ENCODE measurements at regions of chr14 and their contacts with region 1.

Region 1: GRCh38 chr14:22549981-22550673 is 38.9 kb downstream of the DAD1 start:
- DNase-seq: peak; percentile 84
- ATAC-seq: peak; percentile 63
- H3K4me3 Mint-ChIP-seq: peak overlapping the region; percentile 71
- H3K27ac Mint-ChIP-seq: peak overlapping the region; percentile 99
- H3K4me1 Mint-ChIP-seq: peaks cover 94% of the 10 kb centered on the region
- H3K27me3 Mint-ChIP-seq: no peaks in the 10 kb centered on the region

Region 2: DNA sequence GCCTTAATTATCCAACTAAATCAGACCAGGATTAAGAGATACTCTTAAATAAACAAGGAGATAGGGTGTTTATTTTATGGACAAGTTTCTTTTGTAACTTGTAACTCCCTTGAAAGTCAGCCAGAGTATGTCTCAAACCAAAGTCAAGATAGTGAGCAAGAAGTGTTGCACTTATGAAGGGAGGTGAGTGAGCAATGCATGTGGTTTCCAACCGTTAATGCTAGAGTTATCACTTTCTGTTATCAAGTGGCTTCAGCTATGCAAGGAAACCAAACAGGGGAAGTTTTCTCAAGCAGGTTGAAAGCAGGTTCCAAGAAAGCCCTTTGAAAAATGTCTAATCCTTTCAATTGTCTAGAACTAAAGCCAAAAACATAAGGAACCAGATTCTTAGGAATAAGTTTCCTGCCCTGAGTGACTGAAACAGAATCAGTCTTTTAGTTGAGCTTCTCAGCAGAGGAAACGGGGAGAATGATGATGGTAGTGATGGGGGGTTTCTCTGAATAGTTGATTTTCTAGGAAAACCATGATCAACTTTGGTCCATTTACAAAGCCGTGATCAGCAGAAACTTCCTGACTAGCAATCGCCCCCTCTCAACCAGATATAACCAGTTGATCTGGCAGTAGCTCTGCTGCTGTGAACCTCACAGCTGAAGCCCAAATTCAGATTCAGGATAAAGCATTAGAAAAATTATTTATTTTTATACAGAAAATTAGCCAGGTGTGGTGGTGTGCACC is 89.5 kb before region 1 on chr14:
- CTCF ChIA-PET with region 1: no interaction called
- POLR2A ChIA-PET with region 1: no interaction called
- intact Hi-C with region 1: no loop called
- DNase-seq: no peak
- ATAC-seq: no peak
- H3K4me3 Mint-ChIP-seq: no peak overlapping the region
- H3K27ac Mint-ChIP-seq: no peak overlapping the region
- H3K4me1 Mint-ChIP-seq: no peaks in the 10 kb centered on the region
- H3K27me3 Mint-ChIP-seq: no peaks in the 10 kb centered on the region

Region 3: DNA sequence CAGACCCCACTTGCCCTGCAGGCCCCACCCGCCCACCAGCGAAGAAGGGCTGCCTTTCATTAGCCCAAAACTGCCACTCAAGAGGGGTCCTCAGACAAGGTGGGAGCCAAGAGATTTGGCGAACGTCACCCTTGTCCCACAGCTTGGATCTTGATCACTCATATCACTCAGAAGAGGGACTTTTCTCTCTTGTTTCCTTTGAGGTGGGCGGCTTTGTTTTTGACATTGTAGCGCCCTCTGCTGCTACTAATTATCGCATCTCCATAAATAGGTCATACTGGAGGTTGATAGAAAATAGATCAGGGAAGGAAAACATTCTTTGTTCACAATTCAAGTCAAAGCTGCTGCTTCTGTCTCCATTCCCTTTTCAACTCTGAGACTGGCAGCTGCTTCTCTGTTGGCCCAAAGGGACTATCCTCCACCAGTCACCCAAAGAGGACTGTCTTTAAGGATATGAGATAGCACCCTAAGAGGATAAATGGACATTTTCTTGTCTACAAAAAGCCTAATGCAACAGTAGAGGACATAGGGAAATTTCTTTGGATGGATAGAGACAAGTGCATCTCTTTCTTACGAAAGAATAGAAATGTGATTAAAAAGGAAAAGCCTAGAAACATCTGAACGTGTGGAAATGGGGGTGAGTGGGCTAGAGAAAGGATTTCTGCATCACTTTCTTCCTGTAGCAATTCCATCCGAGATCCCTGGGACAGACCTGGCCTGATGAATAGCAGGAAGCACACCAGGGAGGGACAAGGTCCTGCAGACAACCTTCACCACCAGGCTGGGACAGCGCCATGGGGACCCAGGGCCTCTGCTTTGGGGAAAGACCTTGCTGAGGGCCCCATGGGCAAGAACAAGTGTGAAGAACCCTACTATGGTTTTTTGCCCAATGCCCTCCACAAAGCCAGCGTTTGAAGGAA is 76.9 kb before region 1 on chr14:
- CTCF ChIA-PET with region 1: no interaction called
- POLR2A ChIA-PET with region 1: no interaction called
- intact Hi-C with region 1: no loop called
- DNase-seq: no peak
- ATAC-seq: no peak
- H3K4me3 Mint-ChIP-seq: no peak overlapping the region
- H3K27ac Mint-ChIP-seq: no peak overlapping the region
- H3K4me1 Mint-ChIP-seq: no peaks in the 10 kb centered on the region
- H3K27me3 Mint-ChIP-seq: no peaks in the 10 kb centered on the region

Region 4: GRCh38 chr14:22531451-22532344 is 18.4 kb before region 1 on chr14:
- CTCF ChIA-PET with region 1: interaction called, 39 read pairs
- POLR2A ChIA-PET with region 1: interaction called, 29 read pairs
- intact Hi-C with region 1: loop called in 1 of 2 experiments (anchors 2 kb)
- DNase-seq: peak; percentile 60
- ATAC-seq: peak; percentile 70
- H3K4me3 Mint-ChIP-seq: peak overlapping the region; percentile 84
- H3K27ac Mint-ChIP-seq: peak overlapping the region; percentile 100
- H3K4me1 Mint-ChIP-seq: peaks cover 87% of the 10 kb centered on the region
- H3K27me3 Mint-ChIP-seq: no peaks in the 10 kb centered on the region

Region 5: GRCh38 chr14:22536853-22537338 is 13.2 kb before region 1 on chr14:
- CTCF ChIA-PET with region 1: interaction called, 39 read pairs
- POLR2A ChIA-PET with region 1: interaction called, 29 read pairs
- intact Hi-C with region 1: loop called (anchors 1 kb)
- DNase-seq: peak; percentile 94
- ATAC-seq: peak; percentile 84
- H3K4me3 Mint-ChIP-seq: peak overlapping the region; percentile 84
- H3K27ac Mint-ChIP-seq: peak overlapping the region; percentile 99
- H3K4me1 Mint-ChIP-seq: peaks cover 95% of the 10 kb centered on the region
- H3K27me3 Mint-ChIP-seq: no peaks in the 10 kb centered on the region

Measured in activated CD4-positive, alpha-beta T cell treated with anti-CD3 and anti-CD28 coated beads for 36 hours (primary cell).